MCF 10A (cell line): ENCODE measurements at regions of chr22 and their contacts with region 1.

Region 1: DNA sequence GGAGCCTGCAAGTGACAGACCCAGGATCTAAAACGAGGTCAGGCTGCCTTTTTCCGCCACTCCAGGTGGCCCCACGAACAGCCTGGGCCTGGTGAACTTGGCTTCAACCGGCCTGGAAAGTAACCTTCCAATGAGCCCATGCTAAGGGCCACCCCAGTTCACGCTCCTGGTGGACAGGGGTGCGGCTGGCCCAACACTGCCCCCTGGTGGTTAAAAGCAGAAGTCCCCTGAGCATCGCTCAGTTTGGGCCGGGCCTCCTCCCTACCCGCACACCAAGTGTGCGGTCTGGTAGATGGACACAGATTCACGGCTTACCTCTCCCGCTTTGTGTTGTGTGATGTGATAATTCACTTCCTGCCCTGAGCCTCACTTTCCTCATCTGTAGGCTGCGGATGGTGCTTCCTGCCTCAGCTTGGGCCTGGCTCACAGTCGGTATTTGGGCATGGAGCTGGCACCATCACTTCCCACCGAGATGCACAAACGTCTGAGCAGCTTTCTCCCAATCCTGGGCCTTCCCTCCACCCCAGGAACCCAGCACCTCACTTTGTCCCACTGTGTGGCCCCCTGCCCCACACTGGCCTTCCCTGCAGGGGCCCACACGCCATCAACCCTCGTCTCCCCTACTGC is 13.7 kb upstream of the SEC14L3 start:
- DNase-seq: peak; percentile 64
- H3K4me3 Mint-ChIP-seq: no peak overlapping the region
- H3K27ac Mint-ChIP-seq: no peak overlapping the region
- H3K4me1 Mint-ChIP-seq: peaks cover 8% of the 10 kb centered on the region
- H3K27me3 Mint-ChIP-seq: peaks cover 15% of the 10 kb centered on the region
- CTCF ChIP-seq: peak; percentile 96

Region 2: GRCh38 chr22:30474683-30475424 is 10.6 kb before region 1 on chr22:
- CTCF ChIA-PET with region 1: interaction called, 27 read pairs
- POLR2A ChIA-PET with region 1: no interaction called
- intact Hi-C with region 1: no loop called
- DNase-seq: no peak
- H3K4me3 Mint-ChIP-seq: no peak overlapping the region
- H3K27ac Mint-ChIP-seq: no peak overlapping the region
- H3K4me1 Mint-ChIP-seq: peaks cover 8% of the 10 kb centered on the region
- H3K27me3 Mint-ChIP-seq: peaks cover 12% of the 10 kb centered on the region
- CTCF ChIP-seq: no peak

Region 3: GRCh38 chr22:30521368-30522156 is 36.1 kb after region 1 on chr22:
- CTCF ChIA-PET with region 1: no interaction called
- POLR2A ChIA-PET with region 1: no interaction called
- intact Hi-C with region 1: no loop called
- DNase-seq: no peak
- H3K4me3 Mint-ChIP-seq: no peak overlapping the region
- H3K27ac Mint-ChIP-seq: no peak overlapping the region
- H3K4me1 Mint-ChIP-seq: no peaks in the 10 kb centered on the region
- H3K27me3 Mint-ChIP-seq: peaks cover 38% of the 10 kb centered on the region
- CTCF ChIP-seq: no peak

Region 4: DNA sequence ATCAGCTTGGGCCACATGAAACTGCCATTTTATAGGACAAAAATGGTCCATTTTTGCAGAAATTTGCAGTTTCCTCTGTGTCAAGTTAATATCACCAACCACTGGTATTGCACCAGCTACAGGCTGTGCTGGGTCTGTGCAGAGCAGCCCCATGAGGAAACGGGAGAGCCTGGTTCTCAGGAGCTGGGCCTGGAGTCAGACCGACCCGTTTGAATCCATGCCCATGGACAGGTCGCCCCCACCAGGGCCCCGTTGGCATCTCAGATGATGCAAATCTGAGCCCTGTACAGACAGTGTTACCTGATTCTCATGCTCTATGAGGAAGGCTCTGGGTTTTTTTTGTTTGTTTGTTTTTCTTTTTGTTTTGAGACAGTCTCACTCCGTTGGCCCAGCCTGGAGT is 70.9 kb after region 1 on chr22:
- CTCF ChIA-PET with region 1: no interaction called
- POLR2A ChIA-PET with region 1: no interaction called
- intact Hi-C with region 1: no loop called
- DNase-seq: no peak
- H3K4me3 Mint-ChIP-seq: no peak overlapping the region
- H3K27ac Mint-ChIP-seq: no peak overlapping the region
- H3K4me1 Mint-ChIP-seq: no peaks in the 10 kb centered on the region
- H3K27me3 Mint-ChIP-seq: no peaks in the 10 kb centered on the region
- CTCF ChIP-seq: no peak